AG04449 (cell line): ENCODE measurements at regions of chr3 and their contacts with region 1.

Region 1: GRCh38 chr3:104460477-104461406 is 906.0 kb upstream of the ALCAM start:
- DNase-seq: peak; percentile 49
- H3K4me3 ChIP-seq: no peak overlapping the region
- CTCF ChIP-seq: peak; percentile 46

Region 2: GRCh38 chr3:104402902-104403301 is 57.8 kb before region 1 on chr3:
- CTCF ChIA-PET with region 1: no interaction called
- POLR2A ChIA-PET with region 1: no interaction called
- DNase-seq: no peak
- H3K4me3 ChIP-seq: no peak overlapping the region
- CTCF ChIP-seq: no peak

Region 3: GRCh38 chr3:104437131-104437750 is 23.5 kb before region 1 on chr3:
- CTCF ChIA-PET with region 1: no interaction called
- POLR2A ChIA-PET with region 1: no interaction called
- DNase-seq: peak; percentile 73
- H3K4me3 ChIP-seq: no peak overlapping the region
- CTCF ChIP-seq: no peak

Region 4: DNA sequence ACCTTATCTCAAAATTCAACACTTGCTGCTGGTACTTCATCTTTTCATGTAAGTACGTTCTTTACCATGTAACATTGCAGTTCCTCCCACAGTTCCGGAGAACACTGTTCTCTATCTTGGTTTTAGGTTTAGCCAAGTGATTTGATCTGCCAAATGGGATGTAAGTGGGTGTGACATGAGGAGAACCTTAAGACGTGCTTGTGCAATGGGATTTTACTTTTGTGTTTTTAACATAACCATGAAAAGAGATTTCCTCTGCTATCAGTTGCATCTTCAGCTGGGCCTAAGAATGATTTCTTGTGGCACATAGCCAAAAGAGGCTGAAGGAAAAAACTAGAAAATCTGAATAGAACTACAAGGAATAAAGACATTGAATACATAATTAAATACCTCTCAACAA is 11.5 kb after region 1 on chr3:
- CTCF ChIA-PET with region 1: interaction called, 13 read pairs
- POLR2A ChIA-PET with region 1: no interaction called
- DNase-seq: no peak
- H3K4me3 ChIP-seq: no peak overlapping the region
- CTCF ChIP-seq: no peak

Region 5: GRCh38 chr3:104606812-104607211 is 146.1 kb after region 1 on chr3:
- CTCF ChIA-PET with region 1: no interaction called
- POLR2A ChIA-PET with region 1: no interaction called
- DNase-seq: no peak
- H3K4me3 ChIP-seq: no peak overlapping the region
- CTCF ChIP-seq: no peak